ENCODE measurements at regions of chr17 and their contacts with region 1.

Region 1: DNA sequence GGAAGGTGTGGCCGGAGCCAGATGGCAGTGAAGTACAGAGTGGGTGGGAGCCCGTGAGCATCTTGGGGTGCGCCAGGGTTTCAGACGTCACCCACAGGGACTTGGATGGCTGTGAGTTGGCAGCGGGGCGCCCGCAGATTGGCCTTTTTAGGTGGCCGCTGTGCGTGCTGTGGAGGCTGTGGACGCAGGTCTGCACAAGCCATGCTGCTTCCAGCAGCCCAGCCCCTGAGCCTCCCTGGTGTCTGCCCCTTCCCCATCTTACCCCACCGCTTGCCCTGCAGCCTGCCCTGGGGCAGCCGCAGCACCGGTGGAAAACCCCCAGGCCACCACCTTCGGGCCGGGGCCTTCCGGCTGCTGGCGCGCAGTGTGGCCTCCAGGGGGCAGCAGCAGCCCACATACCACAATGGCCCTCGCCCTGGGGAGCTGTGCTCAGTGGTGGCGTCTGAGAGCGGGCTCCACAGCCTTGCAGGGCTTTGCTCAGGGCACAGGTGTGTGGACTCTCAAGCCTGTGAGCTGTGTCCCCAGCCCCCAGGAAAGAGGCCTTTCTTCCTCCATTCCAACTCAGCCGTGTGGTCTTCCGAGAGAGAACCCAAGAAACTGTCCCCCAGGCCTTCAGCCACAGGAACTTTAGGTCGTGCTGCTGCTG is 11.8 kb downstream of the ENDOV start:
- DNase-seq: peak; percentile 95
- CTCF ChIP-seq: peak; percentile 96

Region 2: GRCh38 chr17:80377798-80378197 is 49.0 kb before region 1 on chr17:
- CTCF ChIA-PET with region 1: no interaction called
- POLR2A ChIA-PET with region 1: no interaction called
- DNase-seq: no peak
- CTCF ChIP-seq: no peak

Region 3: DNA sequence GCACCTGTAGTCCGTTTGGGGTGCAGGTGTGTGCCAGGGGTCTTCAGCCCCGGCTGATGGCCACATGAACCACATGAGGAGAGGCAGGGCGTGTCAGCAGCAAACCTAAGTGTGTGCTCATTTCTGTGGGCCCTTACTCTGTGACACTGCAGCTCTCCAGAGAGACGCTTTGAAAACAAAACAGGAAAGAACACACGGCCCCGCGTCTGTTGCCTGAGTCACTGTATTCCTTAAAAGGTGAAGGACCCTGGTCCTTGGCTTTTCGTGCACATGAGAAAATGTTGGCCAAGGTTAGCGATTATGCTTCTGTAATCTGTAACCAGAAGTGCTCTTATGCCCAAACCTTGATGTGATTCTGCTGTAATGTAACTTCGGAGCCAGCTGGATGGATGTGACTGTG is 10.7 kb after region 1 on chr17:
- CTCF ChIA-PET with region 1: interaction called, 14 read pairs
- POLR2A ChIA-PET with region 1: no interaction called
- DNase-seq: no peak
- CTCF ChIP-seq: no peak

Region 4: DNA sequence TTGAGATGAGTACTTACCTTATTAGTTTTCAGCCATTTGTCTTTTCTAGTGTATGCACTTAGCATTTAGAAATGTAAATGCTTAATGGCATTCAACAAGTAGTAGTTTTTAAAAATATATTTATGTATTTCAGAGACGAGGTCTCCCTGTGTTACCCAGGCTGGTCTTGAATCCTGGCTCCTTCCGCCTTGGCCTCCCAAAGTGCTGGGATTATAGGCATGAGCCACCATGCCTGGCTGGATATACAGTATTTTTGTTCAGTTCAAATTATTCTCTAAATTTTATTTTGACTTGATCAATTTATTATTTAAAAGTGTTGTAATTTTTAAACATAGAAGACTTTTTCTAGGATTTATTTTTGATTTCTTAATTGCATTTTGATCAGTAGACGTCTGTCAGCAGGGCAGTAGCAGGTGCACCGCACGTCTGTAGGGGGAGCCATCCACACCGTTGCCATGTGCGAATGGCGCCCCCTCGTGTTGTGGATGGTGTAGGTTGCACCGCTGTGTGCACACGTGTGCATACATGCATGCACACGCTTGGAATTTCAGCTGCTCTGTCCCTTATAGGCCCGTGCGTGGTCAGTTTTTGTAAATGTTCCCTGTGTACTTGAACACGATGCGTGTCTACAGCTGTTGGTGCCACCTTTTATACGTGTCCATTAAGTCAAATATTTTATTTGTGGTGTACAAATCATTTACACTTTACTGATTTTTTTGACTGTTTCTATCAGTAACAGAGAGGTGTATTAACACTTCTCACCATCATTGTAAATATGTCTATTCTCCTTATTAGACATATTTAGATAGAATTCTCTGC is 148.5 kb after region 1 on chr17:
- CTCF ChIA-PET with region 1: interaction called, 24 read pairs
- POLR2A ChIA-PET with region 1: no interaction called
- DNase-seq: peak; percentile 91
- CTCF ChIP-seq: peak; percentile 100

Region 5: GRCh38 chr17:80978499-80979497 is 552.0 kb after region 1 on chr17:
- CTCF ChIA-PET with region 1: interaction called, 17 read pairs
- POLR2A ChIA-PET with region 1: no interaction called
- DNase-seq: no peak
- CTCF ChIP-seq: no peak

Measured in GM10248 (cell line).